ENCODE measurements at regions of chr2 and their contacts with region 1.

Region 1: DNA sequence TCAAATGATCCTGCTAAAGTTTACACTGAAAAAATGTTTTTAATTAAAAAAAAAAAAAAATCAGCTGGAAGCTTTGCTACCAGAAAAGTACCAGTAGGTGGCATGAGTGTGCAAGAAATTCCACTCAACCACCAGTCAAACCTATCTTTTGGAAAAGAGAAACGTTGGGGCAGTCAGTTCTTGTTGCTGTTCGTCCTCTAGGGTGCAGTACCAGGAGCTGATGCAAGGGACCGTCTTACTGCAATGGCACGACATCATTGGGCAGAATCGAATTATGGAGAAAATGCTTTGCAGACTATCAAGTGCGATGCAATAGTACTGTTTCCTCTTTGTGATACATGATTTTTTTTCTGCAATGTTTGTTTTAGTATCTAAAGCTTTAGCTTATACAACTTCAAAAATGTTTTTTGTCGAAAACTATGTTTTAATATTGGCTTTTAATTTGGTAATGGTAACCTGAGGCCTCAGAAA is 18.3 kb downstream of the YPEL5 start:
- DNase-seq: peak; percentile 57
- ATAC-seq: peak; percentile 99
- H3K4me3 ChIP-seq: no peak overlapping the region
- H3K27ac ChIP-seq: no peak overlapping the region
- H3K4me1 ChIP-seq: no peaks in the 10 kb centered on the region; the same call in 1 of the 2 replicates
- H3K27me3 ChIP-seq: peaks cover 0 to 2% of the 10 kb centered on the region in 2 experiments; a peak in 1 of 4 replicates
- CTCF ChIP-seq: peak; percentile 71 to 91 (median 89)
- EP300 ChIP-seq: no peak
- POLR2A ChIP-seq: no peak
- RAD21 ChIP-seq: peak; percentile 92

Region 2: DNA sequence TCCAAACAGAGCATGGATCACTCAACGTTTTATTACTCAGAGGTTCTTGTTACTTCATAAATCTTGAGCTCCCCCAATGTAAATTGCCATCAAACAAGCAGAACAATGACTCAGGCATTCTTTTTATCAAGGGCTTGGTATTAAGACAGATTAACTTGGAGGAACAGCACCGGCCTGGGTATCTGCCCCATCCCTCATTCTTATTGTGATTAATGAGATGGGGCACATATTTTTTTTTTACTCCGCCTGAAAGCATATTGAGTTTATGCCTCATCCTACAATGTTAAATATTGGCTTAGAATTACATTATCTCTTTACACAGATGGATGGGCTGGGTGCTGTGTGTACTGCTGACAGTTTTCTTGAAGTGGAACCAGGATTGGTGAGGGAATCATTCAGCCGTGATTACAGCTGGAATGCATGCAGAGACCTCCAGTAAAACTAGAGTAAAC is 662.6 kb before region 1 on chr2:
- CTCF ChIA-PET with region 1: no interaction called
- POLR2A ChIA-PET with region 1: no interaction called
- RAD21 ChIA-PET with region 1: no interaction called
- SMC1A ChIA-PET with region 1: no interaction called
- in situ Hi-C with region 1: no loop called
- intact Hi-C with region 1: no loop called
- DNase-seq: no peak
- ATAC-seq: no peak
- H3K4me3 ChIP-seq: no peak overlapping the region
- H3K27ac ChIP-seq: no peak overlapping the region
- H3K4me1 ChIP-seq: no peaks in the 10 kb centered on the region
- H3K27me3 ChIP-seq: no peaks in the 10 kb centered on the region; a peak in 1 of 4 replicates
- CTCF ChIP-seq: no peak
- EP300 ChIP-seq: no peak
- POLR2A ChIP-seq: no peak
- RAD21 ChIP-seq: no peak

Region 3: GRCh38 chr2:30072250-30072842 is 92.7 kb before region 1 on chr2:
- CTCF ChIA-PET with region 1: no interaction called
- POLR2A ChIA-PET with region 1: no interaction called
- RAD21 ChIA-PET with region 1: no interaction called
- SMC1A ChIA-PET with region 1: no interaction called
- in situ Hi-C with region 1: no loop called
- intact Hi-C with region 1: no loop called
- DNase-seq: peak; percentile 16
- ATAC-seq: peak; percentile 99
- H3K4me3 ChIP-seq: no peak overlapping the region
- H3K27ac ChIP-seq: no peak overlapping the region
- H3K4me1 ChIP-seq: no peaks in the 10 kb centered on the region
- H3K27me3 ChIP-seq: peaks cover 1 to 4% of the 10 kb centered on the region in 2 experiments; a peak in 3 of 4 replicates
- CTCF ChIP-seq: peak; percentile 75 to 83 (median 80)
- EP300 ChIP-seq: no peak
- POLR2A ChIP-seq: no peak
- RAD21 ChIP-seq: peak; percentile 80

Region 4: GRCh38 chr2:30115141-30115980 is 49.7 kb before region 1 on chr2:
- CTCF ChIA-PET with region 1: interaction called, 15 read pairs
- POLR2A ChIA-PET with region 1: no interaction called
- RAD21 ChIA-PET with region 1: interaction called, 3 read pairs
- SMC1A ChIA-PET with region 1: interaction called, 5 read pairs
- in situ Hi-C with region 1: no loop called
- intact Hi-C with region 1: no loop called
- DNase-seq: peak; percentile 20
- ATAC-seq: peak; percentile 89
- H3K4me3 ChIP-seq: no peak overlapping the region
- H3K27ac ChIP-seq: no peak overlapping the region
- H3K4me1 ChIP-seq: no peaks in the 10 kb centered on the region
- H3K27me3 ChIP-seq: no peaks in the 10 kb centered on the region; a peak in 2 of 4 replicates
- CTCF ChIP-seq: peak; percentile 87 to 95 (median 92)
- EP300 ChIP-seq: no peak
- POLR2A ChIP-seq: no peak
- RAD21 ChIP-seq: peak; percentile 79

Region 5: DNA sequence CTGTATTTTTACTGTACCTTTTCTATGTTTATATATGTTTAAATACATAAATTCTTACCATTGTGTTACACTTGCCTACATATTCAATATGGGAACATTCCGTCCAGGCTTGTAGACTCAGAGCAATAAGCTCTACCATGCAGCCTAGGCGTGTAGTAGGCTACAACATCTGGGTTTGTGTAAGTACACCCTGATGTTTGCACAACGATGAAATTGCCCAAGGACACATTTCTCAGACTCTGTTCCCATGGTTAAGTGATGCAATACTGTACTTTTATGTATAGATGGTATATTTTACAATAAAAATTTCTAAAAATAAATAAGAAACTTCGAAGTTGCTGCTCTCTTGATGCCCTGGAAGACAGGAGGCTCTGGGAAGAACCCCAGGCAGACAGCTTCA is 20.1 kb after region 1 on chr2:
- CTCF ChIA-PET with region 1: interaction called, 36 read pairs
- POLR2A ChIA-PET with region 1: no interaction called
- RAD21 ChIA-PET with region 1: interaction called, 11 read pairs
- SMC1A ChIA-PET with region 1: interaction called, 6 read pairs
- in situ Hi-C with region 1: no loop called
- intact Hi-C with region 1: no loop called
- DNase-seq: no peak
- ATAC-seq: no peak
- H3K4me3 ChIP-seq: no peak overlapping the region
- H3K27ac ChIP-seq: no peak overlapping the region
- H3K4me1 ChIP-seq: no peaks in the 10 kb centered on the region
- H3K27me3 ChIP-seq: no peaks in the 10 kb centered on the region
- CTCF ChIP-seq: no peak
- EP300 ChIP-seq: no peak
- POLR2A ChIP-seq: no peak
- RAD21 ChIP-seq: no peak

Region 6: GRCh38 chr2:30217644-30218337 is 52.7 kb after region 1 on chr2:
- CTCF ChIA-PET with region 1: interaction called, 35 read pairs
- POLR2A ChIA-PET with region 1: no interaction called
- RAD21 ChIA-PET with region 1: interaction called, 10 read pairs
- SMC1A ChIA-PET with region 1: interaction called, 18 read pairs
- in situ Hi-C with region 1: no loop called
- intact Hi-C with region 1: no loop called
- DNase-seq: peak; percentile 48
- ATAC-seq: peak; percentile 87
- H3K4me3 ChIP-seq: no peak overlapping the region
- H3K27ac ChIP-seq: no peak overlapping the region
- H3K4me1 ChIP-seq: peaks cover 10% of the 10 kb centered on the region
- H3K27me3 ChIP-seq: no peaks in the 10 kb centered on the region
- CTCF ChIP-seq: no peak
- EP300 ChIP-seq: no peak
- POLR2A ChIP-seq: no peak
- RAD21 ChIP-seq: no peak

Region 7: GRCh38 chr2:30475542-30475941 is 310.5 kb after region 1 on chr2:
- CTCF ChIA-PET with region 1: interaction called, 41 read pairs
- POLR2A ChIA-PET with region 1: no interaction called
- RAD21 ChIA-PET with region 1: interaction called, 21 read pairs
- SMC1A ChIA-PET with region 1: interaction called, 30 read pairs
- in situ Hi-C with region 1: no loop called
- intact Hi-C with region 1: no loop called
- DNase-seq: no peak
- ATAC-seq: no peak
- H3K4me3 ChIP-seq: no peak overlapping the region
- H3K27ac ChIP-seq: no peak overlapping the region
- H3K4me1 ChIP-seq: peaks cover 3% of the 10 kb centered on the region; the same call in 1 of the 2 replicates
- H3K27me3 ChIP-seq: no peaks in the 10 kb centered on the region
- CTCF ChIP-seq: no peak; a peak in 1 of 6 replicates
- EP300 ChIP-seq: no peak
- POLR2A ChIP-seq: no peak
- RAD21 ChIP-seq: peak; percentile 35

Region 8: DNA sequence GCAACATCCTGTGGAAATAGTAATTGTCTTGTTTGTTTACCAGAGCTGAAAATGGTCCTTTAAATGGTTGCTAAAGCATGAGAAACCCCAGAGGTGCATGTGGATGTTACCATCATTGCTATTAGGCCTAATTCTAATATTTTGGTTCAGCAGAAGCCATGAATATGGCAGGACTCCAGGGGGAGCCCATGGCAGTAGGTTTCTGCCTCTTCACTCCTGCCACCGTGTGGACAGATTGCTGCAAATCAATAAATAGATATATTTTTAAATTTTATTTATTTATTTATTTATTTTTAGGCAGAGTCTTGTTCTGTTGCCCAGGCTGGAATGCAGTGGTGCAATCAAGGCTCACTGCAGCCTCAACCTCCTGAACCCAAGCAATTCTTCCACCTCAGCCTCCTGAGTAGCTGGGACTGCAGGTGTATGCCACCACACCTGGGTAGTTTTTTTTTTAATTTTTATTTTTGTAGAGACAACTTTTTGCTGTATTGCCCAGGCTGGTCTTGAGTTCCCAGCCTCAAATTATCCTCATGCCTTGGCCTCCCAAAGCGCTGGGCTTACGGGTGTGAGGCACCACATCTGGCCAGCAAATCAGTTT is 697.1 kb after region 1 on chr2:
- CTCF ChIA-PET with region 1: interaction called, 21 read pairs
- POLR2A ChIA-PET with region 1: no interaction called
- RAD21 ChIA-PET with region 1: interaction called, 6 read pairs
- SMC1A ChIA-PET with region 1: interaction called, 6 read pairs
- in situ Hi-C with region 1: no loop called
- intact Hi-C with region 1: loop called (anchors 10 kb)
- DNase-seq: no peak
- ATAC-seq: peak; percentile 84
- H3K4me3 ChIP-seq: no peak overlapping the region
- H3K27ac ChIP-seq: no peak overlapping the region
- H3K4me1 ChIP-seq: peaks cover 14% of the 10 kb centered on the region
- H3K27me3 ChIP-seq: no peaks in the 10 kb centered on the region
- CTCF ChIP-seq: peak; percentile 72 to 92 (median 86)
- EP300 ChIP-seq: no peak
- POLR2A ChIP-seq: no peak
- RAD21 ChIP-seq: peak; percentile 72

Measured in GM12878 (cell line).